Activated naive CD8-positive, alpha-beta T cell treated with anti-CD3 and anti-CD28 coated beads, Interleukin-2, amount 10 ng/mL, durations not matched to agents 7 days and 5 days (primary cell): ENCODE measurements at regions of chr11 and their contacts with region 1.

Region 1: GRCh38 chr11:65329944-65330403 is 3.7 kb upstream of the DPF2 start:
- DNase-seq: peak; percentile 58
- ATAC-seq: peak; percentile 21
- H3K4me3 Mint-ChIP-seq: peak overlapping the region; percentile 26
- H3K27ac Mint-ChIP-seq: no peak overlapping the region
- H3K4me1 Mint-ChIP-seq: peaks cover 11% of the 10 kb centered on the region
- H3K27me3 Mint-ChIP-seq: peaks cover 5% of the 10 kb centered on the region

Region 2: DNA sequence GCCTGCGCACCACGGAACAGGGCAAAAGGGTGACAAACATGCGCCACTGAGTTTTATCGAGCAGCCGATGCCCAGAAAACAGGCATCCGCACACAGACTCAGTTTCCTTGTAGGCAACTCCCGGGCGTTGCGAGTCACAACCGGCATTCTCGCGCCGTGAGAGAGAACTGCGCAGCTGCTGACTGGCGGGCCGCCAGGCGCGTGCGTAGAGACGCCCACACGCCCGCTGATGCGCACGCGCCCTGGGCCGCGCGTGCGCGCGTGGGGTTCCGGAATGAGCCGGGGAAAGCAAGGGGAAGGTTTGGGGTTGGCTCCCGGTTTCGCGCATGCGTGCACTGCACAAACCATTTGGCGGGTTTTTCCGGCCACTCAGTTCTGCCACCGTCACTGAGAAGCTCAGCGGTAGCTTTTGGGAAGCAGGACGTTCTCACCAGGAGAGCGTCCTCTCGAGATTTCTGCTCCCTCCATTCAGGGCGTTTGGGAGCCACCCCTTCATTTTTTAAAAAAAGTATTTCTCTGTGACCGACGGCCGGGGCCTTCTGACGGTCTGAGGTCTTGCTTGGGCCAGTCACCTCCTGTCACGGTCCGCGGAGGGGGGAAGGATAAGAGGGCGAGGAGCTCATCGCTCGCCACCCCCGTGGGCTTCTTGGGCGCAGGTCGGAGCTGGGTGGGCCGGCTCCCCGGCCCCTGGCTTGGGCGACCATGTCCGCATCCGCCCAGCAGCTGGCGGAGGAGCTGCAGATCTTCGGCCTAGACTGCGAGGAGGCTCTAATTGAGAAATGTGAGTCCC is 68.2 kb before region 1 on chr11 and contains the start of gene POLA2:
- POLR2A ChIA-PET with region 1: interaction called, 31 read pairs
- DNase-seq: peak; percentile 99
- ATAC-seq: peak; percentile 97
- H3K4me3 Mint-ChIP-seq: peak within 1 kb of the TSS; percentile 94
- H3K27ac Mint-ChIP-seq: peak within 1 kb of the TSS; percentile 91
- H3K4me1 Mint-ChIP-seq: peaks cover 49% of the 10 kb centered on the region
- H3K27me3 Mint-ChIP-seq: peaks cover 4% of the 10 kb centered on the region
- total RNA-seq, gene POLA2: 57.3 to 62.2 TPM

Region 3: DNA sequence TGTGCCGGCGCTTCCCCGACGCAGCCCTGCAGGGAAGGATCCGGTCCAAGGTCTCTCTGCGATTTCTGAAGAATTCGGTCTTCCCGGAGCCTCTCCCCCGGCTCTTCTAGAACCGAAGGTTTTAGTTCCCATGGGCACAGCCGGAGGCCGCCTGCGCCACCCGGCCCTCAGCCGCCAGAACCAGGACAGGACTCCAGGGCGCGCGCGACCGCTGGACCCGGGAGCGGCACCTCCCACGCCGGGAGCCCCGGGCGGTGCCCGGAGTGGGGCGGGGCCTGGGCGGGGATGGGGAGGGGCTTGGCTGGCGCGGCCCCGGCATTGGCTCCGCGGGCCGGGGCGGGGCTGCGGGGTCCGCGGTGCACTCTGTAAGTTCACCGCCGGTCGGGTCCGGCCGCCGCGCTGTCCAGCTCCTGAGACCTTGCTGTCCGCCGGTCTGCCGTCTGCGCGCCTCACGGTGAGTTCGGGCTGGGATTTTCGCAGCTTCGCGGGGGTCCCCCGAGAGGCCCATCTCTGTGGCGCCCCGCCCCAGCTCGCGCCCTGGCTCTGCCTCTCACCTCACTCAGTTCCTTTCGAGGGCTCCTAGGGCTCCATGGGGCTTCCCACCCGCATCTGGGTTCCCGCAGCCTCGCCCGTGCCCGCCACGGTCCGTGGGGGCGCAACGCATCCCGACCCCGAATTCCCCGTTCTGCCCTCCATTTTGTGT is 15.3 kb before region 1 on chr11 and contains the start of gene CDC42EP2:
- POLR2A ChIA-PET with region 1: interaction called, 12 read pairs
- DNase-seq: peak; percentile 85
- ATAC-seq: peak; percentile 89
- H3K4me3 Mint-ChIP-seq: peak within 1 kb of the TSS; percentile 74
- H3K27ac Mint-ChIP-seq: no peak within 1 kb of the TSS
- H3K4me1 Mint-ChIP-seq: peaks cover 6% of the 10 kb centered on the region
- H3K27me3 Mint-ChIP-seq: peaks cover 20% of the 10 kb centered on the region
- total RNA-seq, gene CDC42EP2: 0.51 to 1.7 TPM

Region 4: GRCh38 chr11:65340226-65340625 is 10.3 kb after region 1 on chr11:
- POLR2A ChIA-PET with region 1: interaction called, 10 read pairs
- DNase-seq: no peak
- ATAC-seq: no peak
- H3K4me3 Mint-ChIP-seq: no peak overlapping the region
- H3K27ac Mint-ChIP-seq: peak overlapping the region; percentile 48
- H3K4me1 Mint-ChIP-seq: peaks cover 18% of the 10 kb centered on the region
- H3K27me3 Mint-ChIP-seq: no peaks in the 10 kb centered on the region

Region 5: DNA sequence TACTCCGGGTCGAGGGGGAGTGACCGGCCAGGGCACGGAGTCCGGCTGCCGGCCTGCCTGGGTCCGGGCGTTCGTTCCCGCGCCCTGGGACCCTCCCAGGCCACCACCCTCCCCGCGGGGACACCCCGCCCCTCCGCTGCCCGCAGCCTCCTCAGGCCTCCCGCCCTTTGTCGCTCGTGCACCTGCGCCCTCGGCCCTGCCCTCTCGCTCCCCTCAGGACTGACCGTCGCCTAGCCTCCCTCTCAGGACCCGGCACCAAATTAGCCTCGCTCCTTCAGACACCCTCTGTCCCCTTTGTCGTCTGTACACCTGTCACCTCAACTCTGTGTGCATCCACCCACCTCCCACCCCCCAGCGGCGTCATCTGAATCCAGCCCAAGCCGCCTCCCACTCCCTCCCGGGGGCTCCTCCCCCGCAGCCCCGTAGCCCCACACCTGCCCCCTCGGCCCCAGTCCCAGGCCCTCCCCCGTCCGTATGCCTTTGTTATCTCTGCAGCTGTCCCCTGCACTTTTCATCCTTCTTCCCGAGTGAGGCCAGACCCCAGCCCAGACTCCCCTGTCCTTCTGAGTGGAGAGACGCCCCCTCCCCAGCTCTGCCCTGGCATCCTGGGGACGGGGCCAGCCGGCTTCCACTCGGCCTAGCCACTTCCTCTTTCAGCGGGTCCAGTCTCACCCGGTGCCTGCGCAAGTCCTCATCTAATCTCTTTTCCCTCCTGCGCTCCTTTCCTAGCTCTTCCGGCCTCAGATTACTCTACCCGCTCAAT is 25.2 kb after region 1 on chr11:
- POLR2A ChIA-PET with region 1: interaction called, 15 read pairs
- DNase-seq: no peak
- ATAC-seq: peak; percentile 22
- H3K4me3 Mint-ChIP-seq: peak overlapping the region; percentile 93
- H3K27ac Mint-ChIP-seq: peak overlapping the region; percentile 91
- H3K4me1 Mint-ChIP-seq: peaks cover 14% of the 10 kb centered on the region
- H3K27me3 Mint-ChIP-seq: no peaks in the 10 kb centered on the region

Region 6: DNA sequence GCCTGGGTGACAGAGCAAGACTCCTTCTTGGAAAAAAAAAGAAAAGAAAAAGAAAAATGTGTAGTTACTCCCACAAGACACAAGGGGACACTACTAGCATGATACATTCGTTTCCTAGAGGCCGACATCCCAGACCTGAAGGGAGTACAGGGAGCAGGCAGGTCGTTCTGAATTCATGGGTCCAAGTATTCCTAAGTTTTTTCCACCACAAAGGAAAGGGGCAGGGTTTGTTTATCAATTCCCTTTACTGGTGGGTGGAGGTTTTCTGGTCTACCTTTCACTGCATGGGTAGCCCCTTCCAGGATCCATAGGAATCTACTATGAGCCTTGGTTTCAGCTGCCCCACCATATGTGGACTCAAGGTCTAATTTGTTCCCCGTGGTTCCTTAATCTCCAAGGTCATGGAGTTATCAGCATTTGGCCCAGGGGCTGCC is 36.4 kb after region 1 on chr11:
- POLR2A ChIA-PET with region 1: no interaction called
- DNase-seq: no peak
- ATAC-seq: peak; percentile 66
- H3K4me3 Mint-ChIP-seq: no peak overlapping the region
- H3K27ac Mint-ChIP-seq: no peak overlapping the region
- H3K4me1 Mint-ChIP-seq: peaks cover 4% of the 10 kb centered on the region
- H3K27me3 Mint-ChIP-seq: no peaks in the 10 kb centered on the region

Region 7: GRCh38 chr11:65401073-65401802 is 71.3 kb after region 1 on chr11:
- POLR2A ChIA-PET with region 1: no interaction called
- DNase-seq: no peak
- ATAC-seq: no peak
- H3K4me3 Mint-ChIP-seq: no peak overlapping the region
- H3K27ac Mint-ChIP-seq: no peak overlapping the region
- H3K4me1 Mint-ChIP-seq: peaks cover 4% of the 10 kb centered on the region
- H3K27me3 Mint-ChIP-seq: no peaks in the 10 kb centered on the region

Region 8: DNA sequence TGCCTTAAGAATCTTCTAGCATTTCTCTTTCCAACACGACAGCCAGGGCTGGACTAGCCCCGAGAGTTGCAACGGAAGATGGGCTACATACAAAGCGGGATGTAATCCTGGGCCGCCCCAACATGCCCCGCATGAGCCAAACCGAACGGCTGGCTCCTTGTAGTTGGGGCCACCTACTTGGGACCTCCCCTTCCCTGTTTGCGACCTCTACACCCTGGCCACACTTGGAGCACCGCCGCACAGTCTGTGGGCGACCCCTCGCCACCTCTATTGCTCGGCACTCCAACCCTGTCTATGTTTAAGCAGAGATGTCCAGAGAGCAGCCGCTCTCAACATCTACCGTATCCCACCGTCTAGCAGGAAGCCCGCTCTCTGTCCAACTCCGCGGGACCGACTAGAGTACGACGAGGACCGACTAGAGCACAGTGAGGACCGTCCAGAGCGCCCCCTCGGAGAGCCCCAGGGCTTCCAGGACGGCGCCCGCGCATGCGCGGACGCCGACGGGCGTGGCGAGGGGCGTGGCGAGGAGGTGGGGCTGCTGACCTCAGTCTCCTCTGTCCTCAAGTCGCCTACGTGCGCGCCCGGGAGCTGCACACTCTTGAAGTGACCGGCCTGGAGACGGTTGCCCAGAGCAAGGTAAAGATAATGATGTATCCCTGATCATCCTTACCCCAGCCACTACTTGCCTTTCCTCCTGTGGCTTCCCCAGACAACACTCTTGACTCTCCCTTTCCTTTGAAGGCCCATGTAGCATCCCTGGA is 124.9 kb after region 1 on chr11:
- POLR2A ChIA-PET with region 1: no interaction called
- DNase-seq: peak; percentile 88
- ATAC-seq: peak; percentile 94
- H3K4me3 Mint-ChIP-seq: peak overlapping the region; percentile 93
- H3K27ac Mint-ChIP-seq: peak overlapping the region; percentile 91
- H3K4me1 Mint-ChIP-seq: peaks cover 18% of the 10 kb centered on the region
- H3K27me3 Mint-ChIP-seq: peaks cover 2% of the 10 kb centered on the region

Region 9: GRCh38 chr11:65497141-65498041 is 167.4 kb after region 1 on chr11:
- POLR2A ChIA-PET with region 1: interaction called, 10 read pairs
- DNase-seq: peak; percentile 99
- ATAC-seq: peak; percentile 79
- H3K4me3 Mint-ChIP-seq: no peak overlapping the region
- H3K27ac Mint-ChIP-seq: no peak overlapping the region
- H3K4me1 Mint-ChIP-seq: peaks cover 23% of the 10 kb centered on the region
- H3K27me3 Mint-ChIP-seq: no peaks in the 10 kb centered on the region

Region 10: GRCh38 chr11:65506770-65507505 is 177.0 kb after region 1 on chr11:
- POLR2A ChIA-PET with region 1: interaction called, 10 read pairs
- DNase-seq: no peak
- ATAC-seq: peak; percentile 34
- H3K4me3 Mint-ChIP-seq: no peak overlapping the region
- H3K27ac Mint-ChIP-seq: peak overlapping the region; percentile 80
- H3K4me1 Mint-ChIP-seq: peaks cover 44% of the 10 kb centered on the region
- H3K27me3 Mint-ChIP-seq: no peaks in the 10 kb centered on the region